GM10248 (cell line): ENCODE measurements at regions of chr9 and their contacts with region 1.

Region 1: GRCh38 chr9:123349691-123350480 is 6.1 kb upstream of the CRB2 start:
- DNase-seq: peak; percentile 83
- CTCF ChIP-seq: peak; percentile 84

Region 2: GRCh38 chr9:122464633-122465567 is 885.0 kb before region 1 on chr9:
- CTCF ChIA-PET with region 1: interaction called, 11 read pairs
- POLR2A ChIA-PET with region 1: no interaction called
- DNase-seq: peak; percentile 67
- CTCF ChIP-seq: peak; percentile 80

Region 3: GRCh38 chr9:123091459-123091858 is 258.4 kb before region 1 on chr9:
- CTCF ChIA-PET with region 1: interaction called, 26 read pairs
- POLR2A ChIA-PET with region 1: no interaction called
- DNase-seq: no peak
- CTCF ChIP-seq: peak; percentile 26

Region 4: DNA sequence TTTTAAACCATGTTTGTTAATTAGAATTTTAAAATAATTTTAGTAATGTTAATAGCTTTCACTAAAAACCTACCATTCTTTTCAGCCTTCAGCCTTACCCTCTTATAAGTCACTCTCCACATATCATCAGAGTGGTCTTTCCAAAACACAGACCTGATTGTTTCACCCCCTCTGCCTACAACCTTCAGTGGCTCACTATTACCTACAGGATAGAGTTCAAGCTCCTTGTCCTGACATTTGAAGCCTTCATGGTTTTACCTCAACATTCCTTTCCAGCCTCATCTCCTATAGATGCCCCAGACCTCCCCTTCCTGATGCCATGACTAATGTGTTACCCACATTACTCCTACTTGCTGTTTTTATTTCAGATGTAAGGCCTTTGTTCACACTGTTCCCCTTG is 53.7 kb before region 1 on chr9:
- CTCF ChIA-PET with region 1: interaction called, 12 read pairs
- POLR2A ChIA-PET with region 1: no interaction called
- DNase-seq: no peak
- CTCF ChIP-seq: no peak

Region 5: GRCh38 chr9:123360161-123361085 is 10.5 kb after region 1 on chr9:
- CTCF ChIA-PET with region 1: interaction called, 28 read pairs
- POLR2A ChIA-PET with region 1: no interaction called
- DNase-seq: peak; percentile 84
- CTCF ChIP-seq: no peak

Region 6: DNA sequence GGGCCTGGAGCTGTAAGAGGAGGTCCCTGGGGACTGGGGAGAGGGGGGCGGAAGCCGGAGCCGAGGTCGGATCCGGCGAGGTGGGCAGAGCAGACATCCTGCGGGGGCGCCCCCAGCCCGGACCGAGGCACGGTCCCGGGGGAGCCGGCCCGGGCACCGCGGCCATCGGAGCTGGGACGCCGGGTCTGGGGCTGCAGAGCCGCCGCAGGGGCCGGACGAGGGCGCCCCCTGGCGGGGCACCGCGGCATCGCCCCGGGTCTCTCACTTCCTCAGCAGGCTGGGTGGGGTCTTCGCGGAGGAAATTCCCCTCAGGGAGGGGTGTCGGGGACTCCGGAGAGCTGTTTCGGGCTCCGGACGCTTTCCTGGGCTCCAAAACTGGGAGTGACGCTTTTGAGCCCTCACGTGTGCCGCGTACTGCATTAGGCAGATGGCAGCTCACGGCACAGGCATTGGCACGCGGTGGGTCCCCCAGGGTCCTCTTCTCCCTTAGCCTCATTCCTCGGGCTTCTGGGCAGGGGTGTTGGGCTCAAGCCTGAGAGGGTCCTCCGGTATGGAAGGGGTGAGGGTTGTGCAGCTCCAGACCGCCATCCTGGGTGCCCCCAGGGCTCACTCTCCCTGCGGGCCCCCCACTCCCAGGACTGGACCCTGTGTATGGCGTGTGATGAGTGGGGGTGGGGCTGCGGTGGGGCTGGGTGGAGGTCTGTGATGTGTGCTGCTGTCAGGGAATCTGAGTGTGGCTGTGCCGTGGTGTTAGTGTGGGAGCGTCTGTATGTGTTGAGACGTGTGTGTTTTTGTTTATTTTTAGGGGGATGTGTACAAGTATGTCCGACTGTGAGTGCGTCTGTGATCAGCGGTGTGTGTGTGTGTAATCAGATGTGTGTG is 691.3 kb after region 1 on chr9:
- CTCF ChIA-PET with region 1: interaction called, 12 read pairs
- POLR2A ChIA-PET with region 1: no interaction called
- DNase-seq: peak; percentile 88
- CTCF ChIP-seq: peak; percentile 86